ENCODE measurements at regions of chr10 and their contacts with region 1.

Region 1: GRCh38 chr10:102132563-102133372 is at the start of gene PPRC1:
- DNase-seq: peak; percentile 97
- H3K4me3 Mint-ChIP-seq: peak within 1 kb of the TSS; percentile 95
- H3K27ac Mint-ChIP-seq: peak within 1 kb of the TSS; percentile 94
- H3K4me1 Mint-ChIP-seq: peaks cover 29% of the 10 kb centered on the region
- H3K27me3 Mint-ChIP-seq: no peaks in the 10 kb centered on the region
- total RNA-seq, gene PPRC1: 112 and 115 TPM in 2 replicates

Region 2: DNA sequence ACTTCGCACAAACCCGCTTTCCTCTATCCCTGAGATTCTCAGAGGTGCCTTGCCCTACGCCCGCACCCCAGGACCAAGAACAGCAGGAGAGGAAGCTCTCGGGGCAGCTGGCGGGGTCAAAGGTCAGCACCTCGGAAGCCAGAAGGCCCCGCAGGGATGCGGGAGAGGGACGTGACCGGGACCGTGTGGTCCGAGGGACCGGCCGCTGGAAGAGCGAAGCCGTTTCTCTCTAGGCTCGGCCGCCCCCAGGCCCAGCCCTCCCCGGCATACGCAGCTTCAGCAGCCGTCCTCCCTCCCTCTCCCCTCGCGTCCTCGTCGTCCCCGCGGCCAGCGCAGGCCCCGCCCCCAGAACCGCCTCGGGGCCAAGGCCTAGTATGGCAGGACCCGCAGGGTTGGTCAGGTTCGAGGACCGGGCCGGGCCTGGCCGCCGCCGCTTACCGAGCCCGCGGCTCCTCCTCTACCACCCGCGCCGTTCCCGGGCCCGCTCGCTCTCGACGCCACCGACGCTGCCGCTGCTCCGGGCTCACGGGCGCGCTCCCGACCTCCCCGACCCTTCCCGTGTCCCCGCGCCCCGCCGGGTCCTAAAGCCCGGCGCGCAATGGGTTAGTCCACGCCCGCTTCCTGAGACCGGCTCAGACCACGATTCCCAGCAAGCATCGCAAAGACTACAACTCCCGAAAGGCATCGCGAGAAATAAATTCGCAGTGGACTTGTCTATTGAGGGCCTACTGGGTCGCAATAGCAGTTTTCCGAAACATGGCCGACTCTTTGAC is 76.9 kb before region 1 on chr10 and contains the start of gene ARMH3:
- intact Hi-C with region 1: loop called (anchors 1 kb)
- DNase-seq: peak; percentile 90
- H3K4me3 Mint-ChIP-seq: peak within 1 kb of the TSS; percentile 89
- H3K27ac Mint-ChIP-seq: peak within 1 kb of the TSS; percentile 94
- H3K4me1 Mint-ChIP-seq: peaks cover 31% of the 10 kb centered on the region
- H3K27me3 Mint-ChIP-seq: no peaks in the 10 kb centered on the region
- total RNA-seq, gene ARMH3: 21.5 and 24.8 TPM in 2 replicates

Region 3: GRCh38 chr10:102120142-102120990 is 12.4 kb before region 1 on chr10 and contains the start of gene LDB1:
- intact Hi-C with region 1: loop called (anchors 1 kb)
- DNase-seq: peak; percentile 59
- H3K4me3 Mint-ChIP-seq: peak within 1 kb of the TSS; percentile 88
- H3K27ac Mint-ChIP-seq: peak within 1 kb of the TSS; percentile 90
- H3K4me1 Mint-ChIP-seq: peaks cover 52% of the 10 kb centered on the region
- H3K27me3 Mint-ChIP-seq: no peaks in the 10 kb centered on the region
- total RNA-seq, gene LDB1: 78.6 and 87.1 TPM in 2 replicates

Region 4: GRCh38 chr10:102185811-102186527 is 53.2 kb after region 1 on chr10:
- intact Hi-C with region 1: loop called (anchors 2 kb)
- DNase-seq: no peak
- H3K4me3 Mint-ChIP-seq: no peak overlapping the region
- H3K27ac Mint-ChIP-seq: no peak overlapping the region
- H3K4me1 Mint-ChIP-seq: peaks cover 18% of the 10 kb centered on the region
- H3K27me3 Mint-ChIP-seq: peaks cover 4% of the 10 kb centered on the region

Region 5: DNA sequence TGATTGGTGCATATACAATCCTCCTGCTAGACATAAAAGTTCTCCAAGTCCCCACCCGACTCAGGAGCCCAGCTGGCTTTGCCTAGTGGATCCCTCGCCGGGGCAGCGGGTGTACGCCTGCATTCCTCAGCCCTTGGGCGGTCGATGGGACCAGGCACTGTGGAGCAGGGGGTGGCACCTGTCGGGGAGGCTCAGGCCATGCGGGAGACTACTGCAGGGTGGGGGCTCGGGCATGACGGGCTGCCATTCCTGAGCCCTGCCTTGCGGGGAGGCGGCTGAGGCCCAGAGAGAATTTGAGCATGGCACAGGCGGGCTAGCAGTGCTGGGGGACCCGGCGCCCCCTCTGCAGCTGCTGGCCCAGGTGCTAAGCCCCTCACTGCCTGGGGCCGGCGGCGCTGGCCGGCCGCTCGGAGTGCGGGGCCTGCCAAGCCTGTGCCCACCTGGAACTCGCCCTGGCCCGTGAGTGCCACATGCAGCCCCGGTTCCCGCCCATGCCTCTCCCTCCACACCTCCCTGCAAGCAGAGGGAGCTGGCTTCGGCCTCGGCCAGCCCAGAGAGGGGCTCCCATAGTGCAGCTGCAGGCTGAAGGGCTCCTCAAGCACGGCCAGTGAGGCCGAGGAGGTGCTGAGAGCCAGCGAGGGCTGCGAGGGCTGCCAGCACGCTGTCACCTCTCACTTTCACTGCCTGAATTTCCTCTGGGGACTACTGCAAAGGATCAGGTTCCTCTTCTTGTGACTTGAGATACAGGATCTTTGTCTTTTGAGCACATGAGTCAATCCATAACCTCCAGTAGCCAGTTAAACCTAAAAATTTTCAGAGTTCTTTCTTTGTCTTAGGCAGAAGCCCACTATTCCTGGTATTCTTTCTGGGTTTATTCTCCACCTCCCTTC is 68.2 kb after region 1 on chr10:
- intact Hi-C with region 1: no loop called
- DNase-seq: no peak
- H3K4me3 Mint-ChIP-seq: no peak overlapping the region
- H3K27ac Mint-ChIP-seq: no peak overlapping the region
- H3K4me1 Mint-ChIP-seq: peaks cover 16% of the 10 kb centered on the region
- H3K27me3 Mint-ChIP-seq: no peaks in the 10 kb centered on the region

Region 6: GRCh38 chr10:102432162-102432950 is 299.6 kb after region 1 on chr10 and contains the start of gene CUEDC2:
- intact Hi-C with region 1: loop called (anchors 1 kb)
- DNase-seq: peak; percentile 95
- H3K4me3 Mint-ChIP-seq: peak within 1 kb of the TSS; percentile 95
- H3K27ac Mint-ChIP-seq: peak within 1 kb of the TSS; percentile 94
- H3K4me1 Mint-ChIP-seq: peaks cover 55% of the 10 kb centered on the region
- H3K27me3 Mint-ChIP-seq: no peaks in the 10 kb centered on the region
- total RNA-seq, gene CUEDC2: 59.0 and 59.4 TPM in 2 replicates

Measured in activated T-helper 1 cell treated with anti-CD3 and anti-CD28 coated beads, Interleukin-12 subunit alpha, Interleukin-12 subunit beta, Interleukin-2, Interleukin-4 antibody, amounts not matched to agents 30 ng/mL and 10 ng/mL and 1 ng/mL, durations not matched to agents 14 hours and 24 hours and 36 hours (primary cell).